ENCODE measurements at regions of chr19 and their contacts with region 1.

Region 1: DNA sequence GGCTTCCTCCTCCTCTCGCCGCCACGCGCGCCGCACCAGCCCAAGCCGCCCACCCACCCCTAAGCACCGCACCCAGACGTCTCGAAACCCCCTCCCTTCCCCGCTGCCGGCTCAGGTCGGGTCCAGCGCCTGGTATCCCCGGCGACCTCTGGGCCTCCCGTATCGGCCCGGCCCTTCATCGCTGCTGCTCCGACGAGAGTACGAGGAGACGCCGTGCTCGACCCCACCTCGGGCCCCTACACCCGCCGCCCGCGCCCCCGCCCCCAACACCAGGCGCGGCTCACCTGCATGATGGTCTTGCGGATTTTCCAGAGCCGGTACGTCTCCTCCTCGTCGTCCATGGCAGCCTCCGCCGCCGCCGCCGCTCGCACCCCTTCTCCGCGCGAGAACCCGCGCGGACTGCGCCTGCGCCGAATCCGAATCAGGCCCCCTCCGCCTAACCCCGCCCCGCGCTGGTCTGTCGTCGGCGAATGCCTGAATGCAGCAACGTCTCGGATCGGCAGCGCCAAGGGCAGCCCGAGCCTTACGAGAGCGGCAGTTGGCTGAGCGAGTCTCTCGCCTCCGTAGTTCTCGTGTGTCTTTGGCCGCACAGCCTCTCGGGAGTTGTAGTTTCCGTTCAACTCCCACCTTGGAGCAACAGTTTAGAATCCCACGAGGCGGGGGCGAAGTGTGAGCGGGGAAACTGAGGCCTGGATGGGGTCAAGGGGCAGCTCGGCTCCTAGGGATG is at the start of gene POLR2E:
- DNase-seq: peak; percentile 100
- ATAC-seq: peak; percentile 96
- total RNA-seq, gene POLR2E: 142 TPM

Region 2: GRCh38 chr19:1039646-1040475 is 55.3 kb before region 1 on chr19 and contains the start of gene ABCA7:
- intact Hi-C with region 1: loop called (anchors 5 kb)
- DNase-seq: peak; percentile 99
- ATAC-seq: peak; percentile 96
- total RNA-seq, gene ABCA7: 7.7 TPM

Measured in Right ventricle myocardium inferior (tissue), 1 donor.